SK-N-SH (cell line): ENCODE measurements at regions of chrX and their contacts with region 1.

Region 1: GRCh38 chrX:37825209-37825842 is 22.0 kb downstream of the DYNLT3 start:
- DNase-seq: peak; percentile 12
- H3K4me3 ChIP-seq: no peak overlapping the region
- H3K27ac ChIP-seq: no peak overlapping the region
- H3K4me1 ChIP-seq: no peaks in the 10 kb centered on the region
- H3K27me3 ChIP-seq: peaks cover 4% of the 10 kb centered on the region; the same call in 1 of the 2 replicates
- CTCF ChIP-seq: peak; percentile 94
- EP300 ChIP-seq: no peak
- RAD21 ChIP-seq: peak; percentile 74

Region 2: DNA sequence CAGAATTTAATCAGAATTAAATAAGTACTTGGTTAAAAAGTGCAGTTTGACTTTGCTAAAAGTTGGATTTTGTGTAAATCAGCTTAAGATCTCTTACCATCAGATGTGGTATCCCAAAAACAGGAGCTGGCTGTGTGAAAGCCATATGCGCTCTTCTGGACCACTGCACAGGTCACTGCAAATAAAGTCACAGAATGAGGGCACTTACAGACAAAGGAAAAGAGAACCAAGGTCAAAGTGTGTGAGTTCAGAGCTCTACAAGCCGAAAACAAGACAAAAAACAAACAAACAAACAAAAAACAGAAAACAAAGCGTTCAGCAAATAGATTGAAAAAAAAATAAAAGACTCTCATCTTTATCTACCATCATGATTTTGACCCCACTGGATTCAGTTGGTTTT is 15.6 kb after region 1 on chrX:
- CTCF ChIA-PET with region 1: interaction called, 10 read pairs
- POLR2A ChIA-PET with region 1: no interaction called
- DNase-seq: no peak
- H3K4me3 ChIP-seq: no peak overlapping the region
- H3K27ac ChIP-seq: no peak overlapping the region
- H3K4me1 ChIP-seq: no peaks in the 10 kb centered on the region
- H3K27me3 ChIP-seq: no peaks in the 10 kb centered on the region
- CTCF ChIP-seq: no peak
- EP300 ChIP-seq: no peak
- RAD21 ChIP-seq: no peak

Region 3: GRCh38 chrX:38045538-38046096 is 220.3 kb after region 1 on chrX:
- CTCF ChIA-PET with region 1: no interaction called
- POLR2A ChIA-PET with region 1: no interaction called
- DNase-seq: no peak
- H3K4me3 ChIP-seq: no peak overlapping the region
- H3K27ac ChIP-seq: no peak overlapping the region
- H3K4me1 ChIP-seq: no peaks in the 10 kb centered on the region
- H3K27me3 ChIP-seq: no peaks in the 10 kb centered on the region
- CTCF ChIP-seq: no peak
- EP300 ChIP-seq: no peak
- RAD21 ChIP-seq: no peak